ENCODE measurements at regions of chr3 and their contacts with region 1.

Region 1: GRCh38 chr3:172461530-172462138 is 13.4 kb upstream of the GHSR start:
- DNase-seq: no peak
- H3K4me3 ChIP-seq: no peak overlapping the region
- H3K27ac ChIP-seq: no peak overlapping the region
- H3K27me3 ChIP-seq: peaks cover 11% of the 10 kb centered on the region
- CTCF ChIP-seq: peak; percentile 94

Region 2: GRCh38 chr3:172449466-172450149 is 12.0 kb before region 1 on chr3:
- CTCF ChIA-PET with region 1: interaction called, 14 read pairs
- POLR2A ChIA-PET with region 1: no interaction called
- DNase-seq: no peak
- H3K4me3 ChIP-seq: no peak overlapping the region
- H3K27ac ChIP-seq: no peak overlapping the region
- H3K27me3 ChIP-seq: peaks cover 52% of the 10 kb centered on the region
- CTCF ChIP-seq: no peak

Region 3: GRCh38 chr3:172476347-172476746 is 14.7 kb after region 1 on chr3:
- CTCF ChIA-PET with region 1: interaction called, 14 read pairs
- POLR2A ChIA-PET with region 1: interaction called, 3 read pairs
- DNase-seq: no peak
- H3K4me3 ChIP-seq: no peak overlapping the region
- H3K27ac ChIP-seq: no peak overlapping the region
- H3K27me3 ChIP-seq: no peaks in the 10 kb centered on the region
- CTCF ChIP-seq: no peak

Region 4: DNA sequence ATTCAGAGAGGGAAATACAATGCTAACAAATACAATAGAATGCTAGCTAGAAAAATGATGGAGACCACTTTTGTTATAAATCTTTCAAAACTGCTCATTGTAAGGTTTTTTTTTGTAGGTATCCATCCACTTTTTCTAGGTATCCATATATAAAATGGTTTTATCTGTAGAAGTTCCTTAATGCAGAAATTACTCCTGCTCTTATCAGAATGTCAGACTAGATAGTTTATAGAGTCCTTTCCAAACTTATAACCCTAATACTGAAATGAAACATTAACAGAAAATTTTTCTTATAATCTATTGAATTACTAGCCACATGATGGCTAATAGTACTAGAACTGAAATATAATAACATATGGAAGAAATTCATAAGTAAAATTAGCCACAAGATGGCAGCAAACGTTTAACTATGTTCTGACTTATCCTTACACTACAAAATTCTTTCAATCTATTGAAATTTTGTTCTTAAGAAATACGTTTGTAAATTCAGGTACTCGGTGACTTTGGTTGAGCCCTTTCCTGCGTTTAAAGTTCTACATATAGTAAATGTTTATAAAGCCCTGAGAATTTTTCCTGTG is 347.4 kb after region 1 on chr3:
- CTCF ChIA-PET with region 1: no interaction called
- POLR2A ChIA-PET with region 1: no interaction called
- DNase-seq: peak; percentile 10
- H3K4me3 ChIP-seq: no peak overlapping the region
- H3K27ac ChIP-seq: no peak overlapping the region
- H3K27me3 ChIP-seq: no peaks in the 10 kb centered on the region
- CTCF ChIP-seq: peak; percentile 27

Region 5: DNA sequence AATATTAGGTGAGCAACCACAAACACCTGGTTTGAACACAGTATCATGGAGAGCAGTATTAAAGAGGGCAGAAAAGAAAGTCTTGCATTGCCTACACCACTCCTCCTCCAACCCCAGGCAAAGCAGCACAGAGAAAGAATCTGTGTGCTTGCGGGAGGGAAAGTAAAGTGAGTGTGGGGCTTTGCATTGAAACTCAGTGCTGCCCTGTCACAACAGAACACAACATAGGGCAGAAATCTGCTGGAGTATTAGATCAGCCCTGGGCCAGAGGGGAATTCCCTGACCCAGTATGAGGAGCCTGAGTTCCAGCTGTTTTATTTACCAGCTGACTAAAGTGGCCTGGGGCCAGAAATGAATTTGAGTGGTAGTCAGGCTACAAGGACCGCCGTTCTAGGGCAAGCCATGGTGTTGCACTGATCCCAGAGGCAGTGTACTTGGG is 603.9 kb after region 1 on chr3:
- CTCF ChIA-PET with region 1: no interaction called
- POLR2A ChIA-PET with region 1: no interaction called
- DNase-seq: no peak
- H3K4me3 ChIP-seq: no peak overlapping the region
- H3K27ac ChIP-seq: no peak overlapping the region
- H3K27me3 ChIP-seq: no peaks in the 10 kb centered on the region
- CTCF ChIP-seq: no peak

Measured in AG04450 (cell line).